ENCODE measurements at regions of chr19 and their contacts with region 1.

Region 1: DNA sequence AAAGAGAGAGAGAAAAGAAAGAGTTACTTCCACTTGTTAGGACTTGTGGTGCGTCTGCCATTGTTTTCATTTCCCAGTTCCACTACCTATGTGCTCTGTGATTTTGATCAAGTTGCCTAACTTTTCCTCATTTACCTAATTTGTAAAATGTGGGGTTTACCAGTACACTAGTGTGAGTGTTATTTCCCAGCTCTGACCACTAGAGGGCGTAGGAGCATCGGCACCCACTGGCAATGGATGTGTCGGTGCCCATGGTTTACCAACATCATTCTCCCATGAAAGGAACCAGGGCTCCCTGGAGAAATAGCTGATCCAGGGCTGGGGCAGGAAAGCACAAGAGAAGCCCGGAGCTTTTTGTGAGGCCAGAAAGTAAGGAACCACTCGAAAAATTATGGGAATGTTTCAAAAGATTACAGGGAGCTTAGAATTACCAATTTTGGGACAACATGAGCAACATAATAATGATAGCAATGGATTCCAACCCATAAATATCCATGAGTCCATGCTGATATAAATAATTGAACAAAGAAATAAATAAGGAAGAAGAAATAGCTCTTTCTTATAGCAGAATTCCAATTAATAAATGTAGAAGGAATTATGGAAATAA is 15.1 kb upstream of the CEACAM4 start:
- DNase-seq: peak; percentile 78 to 99
- ATAC-seq: peak; percentile 94 to 99
- H3K4me3 ChIP-seq: no peak overlapping the region
- H3K27ac ChIP-seq: no peak overlapping the region
- H3K4me1 ChIP-seq: no peaks in the 10 kb centered on the region
- CTCF ChIP-seq: peak; percentile 99
- EP300 ChIP-seq: no peak
- POLR2A ChIP-seq: no peak
- RAD21 ChIP-seq: peak; percentile 95 to 98

Region 2: DNA sequence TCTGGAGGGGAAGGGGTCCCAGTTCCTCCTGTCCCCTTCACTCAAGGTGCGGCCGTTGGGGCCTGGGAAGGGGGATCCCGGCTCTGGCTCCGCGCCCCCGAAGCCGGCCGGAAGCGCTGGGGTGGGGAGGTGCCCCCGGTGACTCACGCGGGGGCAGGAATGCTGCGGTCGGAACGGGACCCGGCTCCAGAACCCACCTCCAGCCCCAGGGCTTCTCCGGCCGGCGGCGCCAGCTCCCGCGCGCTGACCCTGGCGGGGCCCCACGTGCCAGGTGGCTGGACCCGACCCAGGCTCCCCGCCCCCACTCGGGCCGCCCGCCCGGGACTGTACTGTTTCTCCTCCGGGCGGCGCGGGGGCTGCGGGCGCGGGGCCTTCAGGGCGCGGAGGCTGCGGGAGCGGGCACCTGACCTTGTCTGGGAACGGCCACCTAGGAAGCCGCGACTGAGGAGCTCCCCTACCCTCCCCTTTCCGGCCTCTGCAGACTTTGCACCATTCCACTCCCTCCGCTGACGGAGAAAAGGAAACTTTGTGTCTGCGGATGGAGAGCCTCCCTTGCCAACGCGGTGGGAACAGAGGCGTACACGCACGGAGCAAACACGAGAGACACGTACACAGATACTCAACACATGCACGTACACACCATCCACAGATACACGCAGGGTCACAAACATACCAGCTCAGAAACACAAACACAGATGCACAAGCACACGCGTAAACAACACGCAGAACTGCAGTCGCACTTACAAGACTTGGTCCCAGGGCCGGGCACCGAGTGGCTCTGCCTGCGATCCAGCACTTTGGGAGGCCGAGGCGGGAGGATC is 415.7 kb before region 1 on chr19:
- CTCF ChIA-PET with region 1: no interaction called
- POLR2A ChIA-PET with region 1: no interaction called
- DNase-seq: peak; percentile 95 to 97
- ATAC-seq: peak; percentile 73 to 77
- H3K4me3 ChIP-seq: peak overlapping the region; percentile 41
- H3K27ac ChIP-seq: peak overlapping the region; percentile 91 to 95
- H3K4me1 ChIP-seq: peaks cover 64% of the 10 kb centered on the region
- CTCF ChIP-seq: no peak
- EP300 ChIP-seq: peak; percentile 72 to 93; a peak in 3 of 5 replicates
- POLR2A ChIP-seq: no peak; the same call in 1 of the 2 replicates
- RAD21 ChIP-seq: peak in 1 of 2 experiments; percentile 36; a peak in 3 of 5 replicates

Region 3: GRCh38 chr19:41409288-41409687 is 232.7 kb before region 1 on chr19:
- CTCF ChIA-PET with region 1: no interaction called
- POLR2A ChIA-PET with region 1: no interaction called
- DNase-seq: peak; percentile 55 to 60
- ATAC-seq: peak; percentile 55 to 58; a peak in 5 of 6 replicates
- H3K4me3 ChIP-seq: no peak overlapping the region
- H3K27ac ChIP-seq: no peak overlapping the region
- H3K4me1 ChIP-seq: peaks cover 12% of the 10 kb centered on the region
- CTCF ChIP-seq: no peak
- EP300 ChIP-seq: no peak
- POLR2A ChIP-seq: no peak
- RAD21 ChIP-seq: no peak

Region 4: DNA sequence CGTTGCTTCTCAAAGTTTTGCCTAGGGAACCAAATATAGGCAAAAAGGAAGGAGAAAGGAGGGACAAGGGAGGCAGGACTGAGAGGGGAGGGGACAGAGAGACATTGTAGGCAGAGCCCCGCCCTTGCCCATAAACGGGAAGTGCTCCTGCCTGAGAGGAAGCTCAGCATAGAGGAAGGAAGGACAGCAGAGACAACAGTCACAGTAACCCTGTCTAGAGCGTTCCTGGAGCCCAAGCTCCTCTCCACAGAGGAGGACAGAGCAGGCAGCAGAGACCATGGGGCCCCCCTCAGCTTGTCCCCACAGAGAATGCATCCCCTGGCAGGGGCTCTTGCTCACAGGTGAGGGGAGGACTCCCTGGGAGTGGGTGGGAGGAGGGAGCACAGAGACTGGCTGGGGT is 66.0 kb before region 1 on chr19 and contains the start of gene CEACAM21:
- CTCF ChIA-PET with region 1: interaction called, 10 read pairs
- POLR2A ChIA-PET with region 1: no interaction called
- DNase-seq: no peak
- ATAC-seq: peak in 1 of 2 experiments; percentile 39; a peak in 3 of 6 replicates
- H3K4me3 ChIP-seq: no peak within 1 kb of the TSS
- H3K27ac ChIP-seq: no peak within 1 kb of the TSS
- H3K4me1 ChIP-seq: no peaks in the 10 kb centered on the region
- CTCF ChIP-seq: no peak
- EP300 ChIP-seq: no peak
- POLR2A ChIP-seq: no peak
- RAD21 ChIP-seq: no peak
- polyA plus RNA-seq, gene CEACAM21: not detected in 2 replicates

Region 5: DNA sequence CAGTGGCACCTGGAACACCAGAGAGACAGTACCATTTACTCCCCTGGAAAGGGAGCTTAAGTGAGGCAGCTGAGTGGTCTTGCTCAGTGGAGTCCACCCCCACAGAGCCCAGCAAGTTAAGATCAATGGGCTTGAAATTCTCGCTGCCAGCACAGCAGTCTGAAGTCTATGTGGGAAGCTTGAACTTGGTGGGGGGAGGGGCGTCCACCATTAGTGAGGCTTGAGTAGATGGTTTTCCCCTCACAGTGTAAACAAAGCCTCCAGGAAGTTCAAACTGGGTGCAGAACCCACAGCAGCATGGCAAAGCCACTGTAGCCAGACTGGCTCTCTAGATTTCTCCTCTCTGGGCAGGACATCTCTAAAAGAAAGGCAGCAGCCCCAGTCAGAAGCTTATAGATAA is 15.2 kb after region 1 on chr19:
- CTCF ChIA-PET with region 1: interaction called, 212 read pairs
- POLR2A ChIA-PET with region 1: no interaction called
- DNase-seq: no peak
- ATAC-seq: no peak
- H3K4me3 ChIP-seq: no peak overlapping the region
- H3K27ac ChIP-seq: no peak overlapping the region
- H3K4me1 ChIP-seq: no peaks in the 10 kb centered on the region
- CTCF ChIP-seq: no peak
- EP300 ChIP-seq: no peak
- POLR2A ChIP-seq: no peak
- RAD21 ChIP-seq: no peak

Region 6: DNA sequence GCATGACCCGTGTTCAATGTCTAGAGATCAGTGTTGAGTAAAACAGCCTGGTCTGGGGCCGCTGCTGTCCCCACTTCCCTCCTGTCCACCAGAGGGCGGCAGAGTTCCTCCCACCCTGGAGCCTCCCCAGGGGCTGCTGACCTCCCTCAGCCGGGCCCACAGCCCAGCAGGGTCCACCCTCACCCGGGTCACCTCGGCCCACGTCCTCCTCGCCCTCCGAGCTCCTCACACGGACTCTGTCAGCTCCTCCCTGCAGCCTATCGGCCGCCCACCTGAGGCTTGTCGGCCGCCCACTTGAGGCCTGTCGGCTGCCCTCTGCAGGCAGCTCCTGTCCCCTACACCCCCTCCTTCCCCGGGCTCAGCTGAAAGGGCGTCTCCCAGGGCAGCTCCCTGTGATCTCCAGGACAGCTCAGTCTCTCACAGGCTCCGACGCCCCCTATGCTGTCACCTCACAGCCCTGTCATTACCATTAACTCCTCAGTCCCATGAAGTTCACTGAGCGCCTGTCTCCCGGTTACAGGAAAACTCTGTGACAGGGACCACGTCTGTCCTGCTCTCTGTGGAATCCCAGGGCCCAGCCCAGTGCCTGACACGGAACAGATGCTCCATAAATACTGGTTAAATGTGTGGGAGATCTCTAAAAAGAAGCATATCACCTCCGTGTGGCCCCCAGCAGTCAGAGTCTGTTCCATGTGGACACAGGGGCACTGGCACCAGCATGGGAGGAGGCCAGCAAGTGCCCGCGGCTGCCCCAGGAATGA is 64.9 kb after region 1 on chr19:
- CTCF ChIA-PET with region 1: interaction called, 229 read pairs
- POLR2A ChIA-PET with region 1: no interaction called
- DNase-seq: peak; percentile 91 to 99
- ATAC-seq: peak; percentile 79 to 94
- H3K4me3 ChIP-seq: peak overlapping the region; percentile 39
- H3K27ac ChIP-seq: peak overlapping the region; percentile 65 to 84; a peak in 5 of 6 replicates
- H3K4me1 ChIP-seq: peaks cover 28% of the 10 kb centered on the region
- CTCF ChIP-seq: peak; percentile 100
- EP300 ChIP-seq: no peak
- POLR2A ChIP-seq: no peak
- RAD21 ChIP-seq: peak; percentile 61 to 86

Region 7: GRCh38 chr19:41746593-41747227 is 104.7 kb after region 1 on chr19:
- CTCF ChIA-PET with region 1: interaction called, 261 read pairs
- POLR2A ChIA-PET with region 1: no interaction called
- DNase-seq: peak; percentile 84 to 87
- ATAC-seq: peak; percentile 90 to 98
- H3K4me3 ChIP-seq: no peak overlapping the region
- H3K27ac ChIP-seq: no peak overlapping the region
- H3K4me1 ChIP-seq: no peaks in the 10 kb centered on the region
- CTCF ChIP-seq: peak; percentile 96
- EP300 ChIP-seq: no peak
- POLR2A ChIP-seq: no peak
- RAD21 ChIP-seq: peak; percentile 94 to 96

Region 8: GRCh38 chr19:41801792-41802211 is 159.8 kb after region 1 on chr19:
- CTCF ChIA-PET with region 1: interaction called, 78 read pairs
- POLR2A ChIA-PET with region 1: no interaction called
- DNase-seq: no peak
- ATAC-seq: no peak
- H3K4me3 ChIP-seq: no peak overlapping the region
- H3K27ac ChIP-seq: no peak overlapping the region
- H3K4me1 ChIP-seq: 0 out of 3 replicates have a peak, but pooled peaks cover 5% of the 10 kb centered on the region
- CTCF ChIP-seq: no peak
- EP300 ChIP-seq: no peak
- POLR2A ChIP-seq: no peak
- RAD21 ChIP-seq: no peak